ENCODE measurements at regions of chr6 and their contacts with region 1.

Region 1: GRCh38 chr6:20126789-20127653 is 85.2 kb downstream of the MBOAT1 start:
- DNase-seq: peak; percentile 71
- H3K4me3 ChIP-seq: no peak overlapping the region
- H3K27ac ChIP-seq: no peak overlapping the region
- H3K4me1 ChIP-seq: peaks cover 4% of the 10 kb centered on the region
- H3K27me3 ChIP-seq: no peaks in the 10 kb centered on the region
- CTCF ChIP-seq: peak; percentile 97

Region 2: GRCh38 chr6:20092071-20092566 is 34.9 kb before region 1 on chr6:
- CTCF ChIA-PET with region 1: interaction called, 19 read pairs
- POLR2A ChIA-PET with region 1: no interaction called
- intact Hi-C with region 1: loop called (anchors 1 kb)
- DNase-seq: peak; percentile 69
- H3K4me3 ChIP-seq: no peak overlapping the region
- H3K27ac ChIP-seq: no peak overlapping the region
- H3K4me1 ChIP-seq: peaks cover 3% of the 10 kb centered on the region
- H3K27me3 ChIP-seq: no peaks in the 10 kb centered on the region
- CTCF ChIP-seq: peak; percentile 70